ENCODE measurements at regions of chr3 and their contacts with region 1.

Region 1: GRCh38 chr3:142586803-142587406 is 8.4 kb upstream of the ATR start:
- DNase-seq: peak; percentile 93
- ATAC-seq: peak; percentile 99
- H3K4me3 ChIP-seq: no peak overlapping the region
- H3K27ac ChIP-seq: no peak overlapping the region
- H3K4me1 ChIP-seq: peaks cover 9% of the 10 kb centered on the region; the same call in 1 of the 2 replicates
- H3K27me3 ChIP-seq: no peaks in the 10 kb centered on the region
- CTCF ChIP-seq: peak; percentile 75

Region 2: GRCh38 chr3:142467768-142468167 is 119.1 kb before region 1 on chr3:
- CTCF ChIA-PET with region 1: no interaction called
- POLR2A ChIA-PET with region 1: no interaction called
- intact Hi-C with region 1: no loop called
- DNase-seq: no peak
- ATAC-seq: no peak
- H3K4me3 ChIP-seq: no peak overlapping the region
- H3K27ac ChIP-seq: no peak overlapping the region
- H3K4me1 ChIP-seq: no peaks in the 10 kb centered on the region
- H3K27me3 ChIP-seq: no peaks in the 10 kb centered on the region
- CTCF ChIP-seq: no peak

Region 3: GRCh38 chr3:142680710-142681109 is 93.8 kb after region 1 on chr3:
- CTCF ChIA-PET with region 1: interaction called, 25 read pairs
- POLR2A ChIA-PET with region 1: no interaction called
- intact Hi-C with region 1: loop called (anchors 1 kb)
- DNase-seq: peak; percentile 38
- ATAC-seq: peak; percentile 53; the same call in 1 of the 2 replicates
- H3K4me3 ChIP-seq: no peak overlapping the region
- H3K27ac ChIP-seq: no peak overlapping the region
- H3K4me1 ChIP-seq: no peaks in the 10 kb centered on the region
- H3K27me3 ChIP-seq: no peaks in the 10 kb centered on the region
- CTCF ChIP-seq: peak; percentile 53

Measured in PC-3 (cell line).